T-cell (primary cell): ENCODE measurements at regions of chr11 and their contacts with region 1.

Region 1: DNA sequence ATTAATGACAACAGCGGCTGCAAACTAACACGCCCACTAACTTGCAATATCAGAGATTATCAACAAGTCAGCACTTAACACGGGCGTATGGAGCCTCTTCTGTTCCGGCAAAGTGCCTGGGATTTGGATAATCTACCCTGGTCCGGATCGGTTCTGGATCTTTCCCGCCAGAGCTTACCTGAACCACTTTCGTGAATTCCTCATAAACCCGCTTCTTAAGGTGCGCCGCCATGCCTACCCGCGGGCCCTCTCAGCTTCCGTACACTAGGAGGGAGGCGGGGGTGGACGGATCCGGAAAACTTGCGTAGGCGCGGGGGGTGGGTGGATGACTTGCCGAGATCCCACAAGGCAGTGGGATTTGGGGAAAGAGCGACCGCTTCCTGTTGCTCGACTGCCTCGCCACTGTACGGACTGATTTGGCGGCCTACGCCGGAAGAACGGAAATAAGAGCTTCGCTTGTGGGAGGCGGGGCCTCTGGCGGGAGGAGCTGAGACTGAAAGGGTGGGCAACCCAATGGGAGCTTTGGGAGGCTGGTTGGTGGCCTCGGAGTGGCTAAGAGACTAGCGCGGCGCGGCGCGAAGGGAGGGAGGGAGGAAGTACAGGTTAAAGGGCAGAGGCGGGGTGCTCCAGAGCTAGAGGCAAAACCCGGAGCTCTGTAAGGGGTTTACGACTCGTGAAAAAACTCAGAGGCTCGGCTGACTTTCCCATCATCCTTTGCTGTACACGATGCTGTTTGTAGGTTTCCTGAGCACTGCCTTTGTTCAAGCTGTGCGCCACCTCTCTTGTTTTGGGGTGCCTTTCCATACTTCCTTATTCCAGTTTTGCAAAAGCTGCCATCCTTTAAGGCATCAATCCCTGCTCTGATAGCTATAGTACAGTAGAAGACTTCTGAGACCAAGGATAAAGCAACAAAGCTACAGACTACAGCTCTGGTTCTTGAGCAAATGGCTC is at the start of gene INTS4:
- DNase-seq: peak; percentile 92 to 99 (median 98)
- ATAC-seq: peak; percentile 95 to 98 (median 98)
- H3K4me3 ChIP-seq: peak within 1 kb of the TSS; percentile 70 to 75
- H3K4me3 Mint-ChIP-seq: peak within 1 kb of the TSS; percentile 87 to 92 (median 88)
- H3K27ac ChIP-seq: peak within 1 kb of the TSS; percentile 84
- H3K27ac Mint-ChIP-seq: peak within 1 kb of the TSS; percentile 94 to 98
- H3K4me1 ChIP-seq: peaks cover 11 to 15% of the 10 kb centered on the region in 2 experiments
- H3K4me1 Mint-ChIP-seq: peaks cover 21 to 35% (median 32%) of the 10 kb centered on the region in 3 donors
- H3K27me3 ChIP-seq: no peaks in the 10 kb centered on the region
- H3K27me3 Mint-ChIP-seq: no peaks in the 10 kb centered on the region
- total RNA-seq, gene INTS4: 57.5 to 79.2 (median 62.6) TPM

Region 2: DNA sequence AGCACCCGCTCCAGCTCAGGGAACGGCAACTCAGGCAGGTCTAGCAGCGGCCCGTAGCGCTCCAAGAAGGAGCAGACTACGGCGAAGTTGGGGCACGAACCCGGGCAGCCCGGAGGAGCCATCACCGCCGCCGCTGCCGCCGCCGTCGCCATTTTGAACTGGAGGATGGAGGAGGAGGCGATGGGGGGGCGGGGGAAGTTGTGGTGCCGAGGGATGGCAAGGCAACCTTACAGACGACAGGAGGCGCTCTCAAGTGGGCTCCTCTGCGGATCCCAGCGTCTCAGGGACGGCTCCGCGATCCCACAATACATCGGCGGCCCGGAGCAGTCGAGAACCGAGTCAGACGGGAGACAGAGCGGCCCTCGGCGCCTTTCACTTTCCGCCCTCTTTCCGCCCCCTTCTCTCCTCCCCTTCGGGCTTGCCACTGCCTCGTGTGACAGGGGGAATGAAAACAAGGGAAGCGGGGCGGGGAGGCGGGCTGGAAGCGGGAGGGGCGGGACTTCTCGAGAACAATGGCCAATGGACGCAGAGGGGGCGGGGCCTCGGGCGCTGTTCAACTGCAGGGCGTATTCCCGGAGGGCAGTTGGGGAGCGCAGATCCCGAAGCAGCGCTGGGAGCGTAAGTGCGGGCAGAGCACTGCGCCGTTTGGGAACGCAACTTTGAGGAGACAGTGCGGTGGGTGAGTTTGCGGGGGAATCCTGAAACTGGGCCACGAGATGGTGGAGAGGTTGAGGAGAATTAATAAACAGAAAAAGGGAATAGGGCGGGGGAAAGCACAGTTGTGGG is 173.9 kb before region 1 on chr11 and contains the starts of genes AAMDC and RSF1:
- CTCF ChIA-PET with region 1: interaction called in 1 of 2 experiments, 10 read pairs
- POLR2A ChIA-PET with region 1: no interaction called
- DNase-seq: peak; percentile 89 to 98 (median 96)
- ATAC-seq: peak; percentile 86 to 87 (median 86)
- H3K4me3 ChIP-seq: peak within 1 kb of the TSS; percentile 97 to 100
- H3K4me3 Mint-ChIP-seq: peak within 1 kb of the TSS; percentile 89 to 99 (median 98)
- H3K27ac ChIP-seq: peak within 1 kb of the TSS; percentile 76
- H3K27ac Mint-ChIP-seq: peak within 1 kb of the TSS; percentile 95 to 96
- H3K4me1 ChIP-seq: peaks cover 15 to 17% of the 10 kb centered on the region in 2 experiments
- H3K4me1 Mint-ChIP-seq: peaks cover 41 to 43% (median 41%) of the 10 kb centered on the region in 3 donors
- H3K27me3 ChIP-seq: no peaks in the 10 kb centered on the region
- H3K27me3 Mint-ChIP-seq: no peaks in the 10 kb centered on the region
- total RNA-seq, gene AAMDC: 4.0 to 11.1 (median 7.0) TPM
- total RNA-seq, gene RSF1: 81.5 to 96.8 (median 91.2) TPM

Region 3: GRCh38 chr11:78045851-78046485 is 51.3 kb after region 1 on chr11:
- CTCF ChIA-PET with region 1: interaction called, 3 to 12 read pairs
- POLR2A ChIA-PET with region 1: interaction called in 1 of 2 experiments, 3 read pairs
- DNase-seq: peak; percentile 38 to 85 (median 73)
- ATAC-seq: peak; percentile 92 to 98 (median 96)
- H3K4me3 ChIP-seq: peak overlapping the region in 1 of 2 donors; percentile 1
- H3K4me3 Mint-ChIP-seq: peak overlapping the region; percentile 49 to 63 (median 53)
- H3K27ac ChIP-seq: no peak overlapping the region
- H3K27ac Mint-ChIP-seq: no peak overlapping the region
- H3K4me1 ChIP-seq: peaks cover 3 to 9% of the 10 kb centered on the region in 2 experiments
- H3K4me1 Mint-ChIP-seq: peaks cover 6 to 12% (median 10%) of the 10 kb centered on the region in 3 donors
- H3K27me3 ChIP-seq: no peaks in the 10 kb centered on the region
- H3K27me3 Mint-ChIP-seq: no peaks in the 10 kb centered on the region

Region 4: DNA sequence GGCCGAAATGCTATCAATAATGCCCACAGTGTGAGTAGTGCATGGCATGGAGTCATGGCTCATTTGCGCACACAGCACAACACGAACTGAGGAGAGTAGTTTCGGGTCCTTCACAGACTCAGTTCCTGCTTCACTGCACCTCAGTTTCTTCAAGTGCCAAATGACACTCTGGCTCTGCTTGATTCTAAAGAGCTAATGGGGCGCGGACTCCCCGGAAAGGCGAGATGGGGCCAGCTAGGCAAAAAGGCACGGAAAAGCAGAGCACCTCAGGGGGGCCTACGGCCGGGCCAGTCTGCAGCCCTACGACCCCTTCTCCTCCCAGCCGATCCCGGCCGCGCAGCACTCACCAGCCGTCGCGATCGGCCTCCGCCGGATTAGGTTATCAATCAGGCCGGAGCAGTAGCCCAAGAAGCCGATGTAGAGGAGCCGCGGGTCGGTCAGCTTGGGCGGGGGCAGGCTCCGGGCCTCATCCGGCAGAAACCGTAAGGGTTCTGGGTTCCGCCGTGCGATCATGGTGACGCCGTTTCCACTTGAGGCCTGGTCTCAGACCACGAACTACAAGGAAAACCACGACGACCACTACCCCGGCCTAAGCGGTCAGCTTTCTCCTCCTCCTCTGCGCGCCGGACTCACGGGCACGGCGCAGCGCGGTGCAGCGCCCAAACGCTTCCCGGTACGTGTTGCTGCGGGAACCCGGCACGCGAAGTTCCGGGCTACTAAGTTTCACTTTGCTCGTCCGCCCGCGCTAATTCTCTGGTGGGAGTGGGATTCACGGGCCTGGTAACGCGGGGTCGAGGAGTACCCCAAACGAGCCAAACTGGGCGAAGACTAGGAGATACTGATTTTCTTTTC is 84.8 kb after region 1 on chr11 and contains the start of gene NDUFC2:
- CTCF ChIA-PET with region 1: interaction called, 7 to 12 read pairs
- POLR2A ChIA-PET with region 1: interaction called in 1 of 2 experiments, 3 read pairs
- DNase-seq: peak; percentile 12 to 77 (median 51)
- ATAC-seq: peak; percentile 81 to 87 (median 85)
- H3K4me3 ChIP-seq: peak within 1 kb of the TSS; percentile 79 to 95
- H3K4me3 Mint-ChIP-seq: peak within 1 kb of the TSS; percentile 87 to 95 (median 93)
- H3K27ac ChIP-seq: peak within 1 kb of the TSS; percentile 73
- H3K27ac Mint-ChIP-seq: peak within 1 kb of the TSS; percentile 86 to 98
- H3K4me1 ChIP-seq: peaks cover 16 to 52% of the 10 kb centered on the region in 2 experiments
- H3K4me1 Mint-ChIP-seq: peaks cover 50 to 66% (median 61%) of the 10 kb centered on the region in 3 donors
- H3K27me3 ChIP-seq: no peaks in the 10 kb centered on the region
- H3K27me3 Mint-ChIP-seq: no peaks in the 10 kb centered on the region
- total RNA-seq, gene NDUFC2: 40.8 to 93.8 (median 88.1) TPM

Region 5: DNA sequence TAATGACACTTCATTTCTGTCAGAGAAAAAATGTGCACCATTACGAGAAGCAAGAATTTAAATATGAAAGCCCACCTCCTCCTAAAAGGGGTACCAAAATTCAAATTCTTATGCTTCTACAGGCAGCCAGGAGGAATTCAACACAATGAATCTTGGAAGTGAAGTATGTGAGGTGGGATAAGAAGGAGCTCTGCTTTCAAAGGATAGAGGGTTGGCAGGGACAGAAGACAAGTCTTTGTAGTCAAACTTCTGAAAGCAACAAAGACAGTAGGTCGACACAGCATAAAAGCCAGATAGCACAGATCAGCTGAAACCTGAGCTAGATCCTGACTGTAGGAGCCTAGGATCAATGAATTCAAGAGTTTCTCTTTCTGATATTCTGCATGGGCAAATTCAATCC is 562.5 kb after region 1 on chr11:
- CTCF ChIA-PET with region 1: no interaction called
- POLR2A ChIA-PET with region 1: interaction called in 1 of 2 experiments, 16 read pairs
- DNase-seq: no peak
- ATAC-seq: no peak
- H3K4me3 ChIP-seq: no peak overlapping the region
- H3K4me3 Mint-ChIP-seq: no peak overlapping the region
- H3K27ac ChIP-seq: no peak overlapping the region
- H3K27ac Mint-ChIP-seq: no peak overlapping the region
- H3K4me1 ChIP-seq: peaks cover 0 to 9% of the 10 kb centered on the region in 2 experiments
- H3K4me1 Mint-ChIP-seq: peaks cover 30 to 42% (median 37%) of the 10 kb centered on the region in 3 donors
- H3K27me3 ChIP-seq: no peaks in the 10 kb centered on the region
- H3K27me3 Mint-ChIP-seq: no peaks in the 10 kb centered on the region